CD8-positive, alpha-beta memory T cell (primary cell): ENCODE measurements at regions of chr4 and their contacts with region 1.

Region 1: DNA sequence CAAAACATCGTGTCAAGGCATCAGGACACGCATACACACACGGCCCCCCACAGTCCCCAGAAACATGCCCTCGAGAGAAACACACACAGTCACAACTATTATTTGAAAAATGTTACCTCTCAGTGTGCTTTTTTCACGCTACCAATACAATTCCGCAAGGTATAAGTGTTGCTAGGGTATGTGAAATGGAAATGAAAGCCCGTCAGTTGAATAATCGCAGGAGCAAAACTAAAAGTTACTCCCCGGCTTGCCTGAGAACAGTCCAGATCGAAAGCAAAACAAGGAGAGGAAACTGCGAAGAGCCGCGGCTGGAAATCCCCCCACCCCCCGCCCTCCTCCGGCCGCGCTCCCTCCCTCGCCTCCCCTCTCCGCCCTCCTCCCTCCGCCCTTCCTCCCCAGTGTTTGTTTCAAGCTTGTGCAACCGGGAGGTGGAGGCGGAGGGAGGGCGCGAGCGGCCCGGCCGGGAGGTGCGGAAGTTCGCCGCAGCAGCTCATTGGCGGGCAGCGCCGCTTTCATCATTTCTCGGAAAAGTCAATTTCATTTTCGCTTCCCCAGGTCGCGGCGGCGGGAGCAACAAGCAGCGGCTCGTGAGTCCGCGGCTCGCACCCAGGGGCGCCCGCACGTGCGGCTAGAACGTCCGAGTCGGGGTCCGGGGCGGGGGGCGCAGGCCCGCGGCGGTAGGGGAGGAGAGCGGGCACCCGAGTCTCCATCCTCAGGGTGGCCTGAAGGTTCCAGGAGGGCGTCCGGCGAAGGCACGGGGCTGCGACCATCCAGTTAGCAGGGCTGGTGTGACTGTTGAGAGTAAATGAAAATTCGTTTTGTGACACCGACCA is at the start of gene IRF2:
- DNase-seq: peak; percentile 94 to 98 (median 95)
- H3K4me3 ChIP-seq: peak within 1 kb of the TSS; percentile 100
- H3K4me3 Mint-ChIP-seq: peak within 1 kb of the TSS; percentile 94 to 100 (median 100)
- H3K27ac ChIP-seq: peak within 1 kb of the TSS; percentile 94
- H3K27ac Mint-ChIP-seq: peak within 1 kb of the TSS; percentile 96 to 100 (median 98)
- H3K4me1 ChIP-seq: peaks cover 45% of the 10 kb centered on the region
- H3K4me1 Mint-ChIP-seq: peaks cover 58 to 72% (median 69%) of the 10 kb centered on the region in 3 donors
- H3K27me3 ChIP-seq: no peaks in the 10 kb centered on the region
- H3K27me3 Mint-ChIP-seq: no peaks in the 10 kb centered on the region
- total RNA-seq, gene IRF2: 44.1 to 44.3 TPM

Region 2: GRCh38 chr4:184417802-184418511 is 56.5 kb before region 1 on chr4:
- CTCF ChIA-PET with region 1: no interaction called
- POLR2A ChIA-PET with region 1: interaction called, 11 read pairs
- DNase-seq: no peak
- H3K4me3 ChIP-seq: peak overlapping the region; percentile 50
- H3K4me3 Mint-ChIP-seq: peak overlapping the region in 6 of 7 donors; percentile 44 to 90 (median 83)
- H3K27ac ChIP-seq: peak overlapping the region; percentile 66
- H3K27ac Mint-ChIP-seq: peak overlapping the region; percentile 91 to 99 (median 97)
- H3K4me1 ChIP-seq: peaks cover 65% of the 10 kb centered on the region
- H3K4me1 Mint-ChIP-seq: peaks cover 65 to 91% (median 78%) of the 10 kb centered on the region in 3 donors
- H3K27me3 ChIP-seq: no peaks in the 10 kb centered on the region
- H3K27me3 Mint-ChIP-seq: no peaks in the 10 kb centered on the region

Region 3: DNA sequence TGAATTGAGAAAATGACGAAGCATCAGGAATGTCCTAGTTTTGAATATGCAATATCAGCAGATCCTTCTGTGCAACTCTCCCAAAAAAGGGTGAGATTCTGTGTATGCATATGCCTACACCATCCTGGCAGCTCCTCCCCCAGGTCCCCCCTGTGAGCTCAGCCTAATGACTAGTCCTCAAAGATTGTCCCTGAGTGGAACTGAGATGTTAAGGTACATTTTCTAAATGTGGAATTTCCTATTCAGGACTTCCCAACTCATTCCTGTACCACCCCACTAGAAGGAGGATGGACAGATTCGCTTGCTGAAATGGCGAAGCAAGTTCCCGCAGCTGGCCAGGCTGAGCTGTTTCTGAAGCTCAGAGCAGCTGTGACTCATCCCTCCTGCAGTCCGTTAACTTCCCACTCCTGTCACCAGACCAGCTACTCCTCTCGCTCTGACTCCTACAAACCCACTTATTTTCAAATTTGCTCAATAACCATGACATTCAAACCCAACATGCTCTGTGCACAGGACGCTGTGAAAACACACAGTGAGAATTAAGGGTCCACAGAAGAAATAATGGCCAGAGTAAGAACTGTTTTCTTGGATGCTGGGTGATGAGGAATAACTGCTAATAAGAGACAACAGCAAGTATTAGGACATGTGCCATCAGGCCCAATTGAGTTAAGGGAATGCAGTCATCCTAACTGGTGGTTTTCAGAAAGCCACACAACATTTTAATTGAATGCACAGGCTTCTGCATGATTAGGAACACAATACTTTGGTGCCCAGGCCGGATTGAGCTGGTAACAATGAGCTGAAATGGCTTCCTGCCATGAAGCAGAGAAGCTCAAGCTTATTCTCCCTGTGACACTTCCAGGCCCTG is 39.9 kb after region 1 on chr4:
- CTCF ChIA-PET with region 1: no interaction called
- POLR2A ChIA-PET with region 1: interaction called, 10 read pairs
- DNase-seq: no peak
- H3K4me3 ChIP-seq: no peak overlapping the region
- H3K4me3 Mint-ChIP-seq: peak overlapping the region in 6 of 7 donors; percentile 0 to 61 (median 22)
- H3K27ac ChIP-seq: no peak overlapping the region
- H3K27ac Mint-ChIP-seq: peak overlapping the region in 6 of 8 donors; percentile 31 to 76 (median 54)
- H3K4me1 ChIP-seq: peaks cover 14% of the 10 kb centered on the region
- H3K4me1 Mint-ChIP-seq: peaks cover 19 to 29% (median 25%) of the 10 kb centered on the region in 3 donors
- H3K27me3 ChIP-seq: no peaks in the 10 kb centered on the region
- H3K27me3 Mint-ChIP-seq: no peaks in the 10 kb centered on the region

Region 4: GRCh38 chr4:184538023-184538599 is 63.6 kb after region 1 on chr4:
- CTCF ChIA-PET with region 1: interaction called, 5 read pairs
- POLR2A ChIA-PET with region 1: interaction called, 50 read pairs
- DNase-seq: peak; percentile 20 to 75 (median 63)
- H3K4me3 ChIP-seq: peak overlapping the region; percentile 89
- H3K4me3 Mint-ChIP-seq: peak overlapping the region; percentile 90 to 97 (median 94)
- H3K27ac ChIP-seq: peak overlapping the region; percentile 88
- H3K27ac Mint-ChIP-seq: peak overlapping the region; percentile 97 to 100 (median 99)
- H3K4me1 ChIP-seq: peaks cover 33% of the 10 kb centered on the region
- H3K4me1 Mint-ChIP-seq: peaks cover 40 to 51% (median 41%) of the 10 kb centered on the region in 3 donors
- H3K27me3 ChIP-seq: no peaks in the 10 kb centered on the region
- H3K27me3 Mint-ChIP-seq: no peaks in the 10 kb centered on the region

Region 5: DNA sequence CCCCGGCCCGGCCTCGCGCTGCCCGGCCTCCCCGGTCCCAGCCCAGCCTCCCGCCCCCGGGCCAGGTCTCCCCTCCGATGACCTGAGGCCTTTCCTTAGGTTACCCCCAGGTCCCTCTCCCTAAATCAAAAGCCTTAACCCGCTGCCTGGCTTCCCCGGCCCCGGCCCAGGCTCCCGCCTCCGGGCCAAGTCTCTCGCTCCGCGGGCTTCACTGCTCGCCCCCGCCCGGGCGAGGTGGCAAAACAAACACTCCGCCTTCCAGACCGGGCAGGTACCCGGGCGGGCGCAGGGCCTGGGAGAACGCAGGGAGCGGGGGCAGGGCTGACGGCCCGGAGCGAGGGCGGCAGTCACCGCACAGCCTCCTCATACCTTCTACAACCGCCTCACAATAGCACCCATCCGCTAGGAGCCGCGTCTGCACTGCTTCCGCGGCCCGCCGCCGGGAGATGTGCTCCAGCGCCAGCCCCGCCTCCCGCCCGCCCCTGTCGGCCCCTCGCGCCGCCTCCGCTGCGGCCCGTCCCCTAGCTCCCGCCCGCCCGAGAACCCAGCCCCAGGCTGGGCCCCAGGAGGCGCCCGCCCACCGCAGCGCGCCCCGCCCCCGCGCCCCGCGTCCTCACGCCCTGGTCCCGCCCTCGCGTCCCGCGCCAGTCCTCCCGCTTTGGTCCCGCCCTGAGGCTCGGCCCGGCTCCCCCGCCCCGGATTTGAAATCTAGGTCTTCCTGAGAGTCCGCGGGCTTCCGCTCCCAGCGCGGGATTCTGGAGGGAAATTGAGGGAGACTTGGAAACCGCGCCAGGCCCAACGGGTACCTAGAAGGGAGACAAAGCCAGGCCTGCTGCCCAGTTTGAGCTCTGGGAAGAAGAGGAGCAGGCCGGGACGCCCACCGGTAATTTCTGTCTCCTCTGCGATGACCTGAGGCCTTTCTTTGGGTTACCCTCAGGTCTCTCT is 174.8 kb after region 1 on chr4 and contains the starts of genes CASP3 and PRIMPOL:
- CTCF ChIA-PET with region 1: interaction called, 4 read pairs
- POLR2A ChIA-PET with region 1: interaction called, 16 read pairs
- DNase-seq: peak; percentile 94 to 97 (median 95)
- H3K4me3 ChIP-seq: peak within 1 kb of the TSS; percentile 89
- H3K4me3 Mint-ChIP-seq: peak within 1 kb of the TSS; percentile 92 to 99 (median 97)
- H3K27ac ChIP-seq: peak within 1 kb of the TSS; percentile 82
- H3K27ac Mint-ChIP-seq: peak within 1 kb of the TSS; percentile 87 to 98 (median 96)
- H3K4me1 ChIP-seq: peaks cover 48% of the 10 kb centered on the region
- H3K4me1 Mint-ChIP-seq: peaks cover 50 to 67% (median 60%) of the 10 kb centered on the region in 3 donors
- H3K27me3 ChIP-seq: no peaks in the 10 kb centered on the region
- H3K27me3 Mint-ChIP-seq: no peaks in the 10 kb centered on the region
- total RNA-seq, gene CASP3: 75.1 to 77.1 TPM
- total RNA-seq, gene PRIMPOL: 19.0 to 20.2 TPM